ENCODE measurements at regions of chr5 and their contacts with region 1.

Region 1: DNA sequence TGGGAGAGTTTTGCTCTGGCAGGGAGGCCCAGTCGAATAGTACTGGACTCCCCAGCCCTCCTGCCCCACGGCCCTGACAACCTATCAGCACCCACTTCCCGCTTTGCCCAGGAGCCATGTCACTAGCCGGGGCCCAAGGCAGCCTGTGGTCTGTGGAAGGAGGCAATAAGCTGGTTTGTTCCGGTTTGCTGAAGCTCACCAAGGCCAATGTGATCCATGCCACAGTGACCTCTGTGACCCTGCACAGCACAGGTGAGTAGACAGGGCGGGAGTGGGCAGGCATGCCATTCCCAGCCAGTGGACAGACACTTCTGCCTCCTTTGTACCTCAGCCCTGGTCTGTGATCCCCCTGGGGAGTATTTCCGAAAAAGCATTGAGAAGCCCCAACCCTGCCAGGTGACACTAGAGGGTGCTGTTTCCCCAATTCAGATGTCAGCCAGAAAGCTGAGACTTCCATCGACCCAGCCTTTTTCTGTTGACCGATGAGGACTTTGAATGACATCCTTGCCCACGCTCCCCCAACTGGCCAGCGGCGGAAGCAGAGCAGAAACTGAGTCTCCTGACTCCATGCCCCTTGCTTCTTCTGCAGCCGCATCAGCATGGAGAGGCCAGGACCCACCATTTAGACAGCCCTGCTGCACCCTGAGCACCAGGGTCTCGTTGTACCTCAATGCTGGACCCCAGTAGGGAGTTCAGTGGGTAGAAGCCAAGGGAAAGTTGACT is 9.6 kb downstream of the PCYOX1L start:
- DNase-seq: peak; percentile 68
- ATAC-seq: peak; percentile 69
- H3K4me3 ChIP-seq: no peak overlapping the region
- H3K4me3 Mint-ChIP-seq: no peak overlapping the region
- H3K27ac ChIP-seq: no peak overlapping the region
- H3K27ac Mint-ChIP-seq: no peak overlapping the region
- H3K4me1 ChIP-seq: peaks cover 0 to 6% of the 10 kb centered on the region in 2 donors
- H3K4me1 Mint-ChIP-seq: peaks cover 9% of the 10 kb centered on the region
- H3K27me3 ChIP-seq: no peaks in the 10 kb centered on the region
- H3K27me3 Mint-ChIP-seq: no peaks in the 10 kb centered on the region
- CTCF ChIP-seq: peak; percentile 76

Region 2: DNA sequence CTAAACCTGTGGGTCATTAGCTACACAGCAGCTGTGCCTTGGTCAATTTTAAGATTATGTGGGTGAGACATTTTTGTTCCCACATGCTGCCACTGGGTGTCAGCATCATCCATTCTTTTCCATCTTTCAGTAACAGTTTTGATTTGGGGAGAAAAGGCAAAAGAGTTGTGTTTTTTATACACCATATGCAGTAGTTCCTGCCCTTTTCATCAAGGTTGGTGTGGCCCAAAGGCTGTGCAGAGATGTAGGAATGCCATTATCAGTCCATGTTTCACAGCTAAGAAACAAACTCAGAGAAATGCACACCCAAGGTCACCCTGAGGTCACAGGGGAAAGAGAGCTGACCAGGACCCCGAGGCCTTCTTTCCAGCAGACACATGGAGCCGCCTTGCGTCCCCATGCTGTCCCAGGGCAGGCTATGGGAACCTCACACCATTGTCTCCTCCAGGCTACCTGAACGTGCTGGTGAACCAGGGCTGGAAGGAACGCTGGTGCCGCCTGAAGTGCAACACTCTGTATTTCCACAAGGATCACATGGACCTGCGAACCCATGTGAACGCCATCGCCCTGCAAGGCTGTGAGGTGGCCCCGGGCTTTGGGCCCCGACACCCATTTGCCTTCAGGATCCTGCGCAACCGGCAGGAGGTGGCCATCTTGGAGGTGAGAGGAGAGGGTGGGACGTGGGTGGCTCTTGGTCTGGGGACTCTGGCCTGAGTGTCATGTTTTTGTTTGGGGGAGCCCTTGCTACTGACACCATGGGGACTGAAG is 49.9 kb before region 1 on chr5:
- CTCF ChIA-PET with region 1: interaction called, 134 read pairs
- POLR2A ChIA-PET with region 1: no interaction called
- intact Hi-C with region 1: no loop called
- DNase-seq: peak; percentile 57
- ATAC-seq: peak; percentile 36
- H3K4me3 ChIP-seq: no peak overlapping the region
- H3K4me3 Mint-ChIP-seq: no peak overlapping the region
- H3K27ac ChIP-seq: no peak overlapping the region
- H3K27ac Mint-ChIP-seq: no peak overlapping the region
- H3K4me1 ChIP-seq: no peaks in the 10 kb centered on the region
- H3K4me1 Mint-ChIP-seq: no peaks in the 10 kb centered on the region
- H3K27me3 ChIP-seq: no peaks in the 10 kb centered on the region
- H3K27me3 Mint-ChIP-seq: no peaks in the 10 kb centered on the region
- CTCF ChIP-seq: peak; percentile 78

Region 3: DNA sequence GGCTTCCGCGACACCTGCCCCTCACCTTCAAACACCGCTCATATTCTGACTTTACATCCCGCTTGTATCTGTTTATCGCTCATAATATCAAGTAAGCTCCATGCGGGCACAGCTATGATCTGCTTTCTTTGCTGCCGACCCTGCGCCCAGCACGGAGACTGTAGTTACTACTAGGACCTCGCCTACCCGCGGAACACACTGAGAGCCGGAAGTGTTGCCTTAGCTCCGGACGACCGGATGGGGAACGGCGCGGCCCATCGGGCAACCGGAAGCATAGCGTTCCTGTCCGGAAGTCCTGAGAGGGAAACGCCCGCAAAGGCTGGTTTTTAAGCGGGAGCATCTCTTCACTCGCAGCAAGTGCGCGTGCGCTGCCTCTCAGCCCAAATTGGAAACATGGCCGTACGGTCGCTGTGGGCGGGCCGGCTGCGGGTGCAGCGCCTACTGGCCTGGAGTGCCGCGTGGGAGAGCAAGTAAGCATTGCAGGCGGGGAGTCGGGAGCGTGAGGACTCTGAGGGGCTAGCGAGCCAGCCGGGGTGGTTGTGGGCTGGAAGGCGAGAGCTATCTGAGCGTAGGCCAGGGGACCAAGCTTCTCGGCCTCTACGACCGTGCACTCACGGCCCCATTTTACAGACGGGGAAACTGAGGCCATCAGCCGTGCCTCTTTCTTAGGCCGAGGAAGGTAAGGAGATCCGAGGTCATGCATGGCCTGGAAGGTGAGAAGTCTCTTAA is 22.1 kb before region 1 on chr5 and contains the start of gene GRPEL2:
- CTCF ChIA-PET with region 1: interaction called, 36 read pairs
- POLR2A ChIA-PET with region 1: interaction called, 5 read pairs
- intact Hi-C with region 1: no loop called
- DNase-seq: peak; percentile 88
- ATAC-seq: peak; percentile 90
- H3K4me3 ChIP-seq: peak within 1 kb of the TSS; percentile 62 to 88 (median 77)
- H3K4me3 Mint-ChIP-seq: peak within 1 kb of the TSS; percentile 87
- H3K27ac ChIP-seq: peak within 1 kb of the TSS; percentile 53 to 63
- H3K27ac Mint-ChIP-seq: peak within 1 kb of the TSS; percentile 83
- H3K4me1 ChIP-seq: peaks cover 11 to 22% of the 10 kb centered on the region in 2 donors
- H3K4me1 Mint-ChIP-seq: peaks cover 29% of the 10 kb centered on the region
- H3K27me3 ChIP-seq: no peaks in the 10 kb centered on the region
- H3K27me3 Mint-ChIP-seq: no peaks in the 10 kb centered on the region
- CTCF ChIP-seq: no peak
- total RNA-seq, gene GRPEL2: 12.1 and 12.5 TPM in 2 replicates

Region 4: DNA sequence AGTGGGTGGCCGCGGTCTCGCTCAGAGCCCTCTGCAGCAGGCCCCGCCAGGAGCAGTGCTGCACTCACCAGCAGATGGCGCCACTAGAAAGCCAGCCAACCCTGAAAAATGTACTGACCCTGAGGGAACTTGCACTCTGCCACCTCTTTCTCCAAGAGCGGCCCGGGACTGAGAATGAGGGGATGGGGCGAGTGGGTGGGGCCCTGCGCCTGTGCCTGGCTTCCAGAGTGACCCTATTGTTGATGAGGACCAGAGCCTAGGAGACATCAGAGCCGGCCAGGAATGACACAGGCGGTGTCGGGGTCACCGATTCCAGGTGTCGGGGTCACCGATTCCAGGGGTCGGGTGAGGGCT is 14.6 kb after region 1 on chr5:
- CTCF ChIA-PET with region 1: interaction called, 25 read pairs
- POLR2A ChIA-PET with region 1: no interaction called
- intact Hi-C with region 1: no loop called
- DNase-seq: peak; percentile 68
- ATAC-seq: peak; percentile 73
- H3K4me3 ChIP-seq: no peak overlapping the region
- H3K4me3 Mint-ChIP-seq: no peak overlapping the region
- H3K27ac ChIP-seq: no peak overlapping the region
- H3K27ac Mint-ChIP-seq: no peak overlapping the region
- H3K4me1 ChIP-seq: peaks cover 0 to 5% of the 10 kb centered on the region in 2 donors
- H3K4me1 Mint-ChIP-seq: peaks cover 2% of the 10 kb centered on the region
- H3K27me3 ChIP-seq: no peaks in the 10 kb centered on the region
- H3K27me3 Mint-ChIP-seq: no peaks in the 10 kb centered on the region
- CTCF ChIP-seq: peak; percentile 83

Region 5: DNA sequence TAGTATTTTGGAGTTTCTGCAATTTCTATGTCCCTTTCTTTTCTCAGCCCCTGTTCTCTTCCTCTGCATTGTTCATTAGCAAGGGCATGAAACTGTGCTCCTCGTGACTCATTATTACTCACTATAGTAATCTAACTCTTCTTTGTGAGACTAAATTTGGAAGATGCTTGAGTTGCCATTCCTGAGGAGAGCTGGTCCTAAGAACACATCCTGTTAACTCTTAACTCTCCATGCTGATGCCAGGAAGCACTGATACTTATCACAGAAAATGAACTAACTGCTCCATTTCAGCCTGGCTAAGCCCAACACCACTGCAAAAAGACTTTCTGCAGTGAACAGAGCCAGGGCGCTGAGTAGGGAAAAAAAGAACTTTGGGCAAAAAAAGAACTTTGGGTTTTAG is 194.4 kb after region 1 on chr5:
- CTCF ChIA-PET with region 1: interaction called, 15 read pairs
- POLR2A ChIA-PET with region 1: no interaction called
- intact Hi-C with region 1: no loop called
- DNase-seq: no peak
- ATAC-seq: no peak
- H3K4me3 ChIP-seq: no peak overlapping the region
- H3K4me3 Mint-ChIP-seq: no peak overlapping the region
- H3K27ac ChIP-seq: no peak overlapping the region
- H3K27ac Mint-ChIP-seq: no peak overlapping the region
- H3K4me1 ChIP-seq: no peaks in the 10 kb centered on the region
- H3K4me1 Mint-ChIP-seq: no peaks in the 10 kb centered on the region
- H3K27me3 ChIP-seq: no peaks in the 10 kb centered on the region
- H3K27me3 Mint-ChIP-seq: no peaks in the 10 kb centered on the region
- CTCF ChIP-seq: no peak

Measured in B cell (primary cell).